Dorsolateral prefrontal cortex (tissue), 120 donors: ENCODE measurements at regions of chr10 and their contacts with region 1.

Region 1: DNA sequence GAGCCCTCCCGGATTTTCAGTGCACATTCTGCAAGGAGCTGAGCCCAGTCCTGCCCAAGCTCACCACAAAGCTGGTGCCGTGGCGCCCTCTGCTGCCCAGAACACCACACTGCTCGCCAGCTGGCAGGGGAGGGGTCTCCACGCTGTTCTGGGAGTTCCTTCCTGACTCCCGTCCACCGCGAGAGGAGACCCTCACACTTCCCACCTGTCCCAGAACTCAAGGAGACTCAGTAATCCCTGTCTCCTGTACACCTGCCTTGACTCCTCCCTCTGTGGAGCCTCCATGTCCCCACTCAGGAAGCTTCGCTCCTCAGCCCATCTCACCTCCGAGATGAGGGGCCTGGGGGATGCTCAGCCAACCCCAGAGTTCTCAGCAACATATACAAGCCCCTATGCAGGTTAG is 11.3 kb downstream of the C10orf105 start:
- DNase-seq: peak; percentile 41 to 79 (median 63)
- H3K4me3 ChIP-seq: no peak overlapping the region
- H3K27ac ChIP-seq: peak overlapping the region in 1 of 59 donors; percentile 31
- H3K27me3 ChIP-seq: no peaks in the 10 kb centered on the region
- CTCF ChIP-seq: peak; percentile 55 to 95 (median 87)

Region 2: GRCh38 chr10:71325267-71325666 is 383.0 kb before region 1 on chr10:
- intact Hi-C with region 1: loop called in 1 of 2 experiments (anchors 2 kb)
- DNase-seq: no peak
- H3K4me3 ChIP-seq: no peak overlapping the region
- H3K27ac ChIP-seq: no peak overlapping the region
- H3K27me3 ChIP-seq: no peaks in the 10 kb centered on the region
- CTCF ChIP-seq: no peak

Region 3: DNA sequence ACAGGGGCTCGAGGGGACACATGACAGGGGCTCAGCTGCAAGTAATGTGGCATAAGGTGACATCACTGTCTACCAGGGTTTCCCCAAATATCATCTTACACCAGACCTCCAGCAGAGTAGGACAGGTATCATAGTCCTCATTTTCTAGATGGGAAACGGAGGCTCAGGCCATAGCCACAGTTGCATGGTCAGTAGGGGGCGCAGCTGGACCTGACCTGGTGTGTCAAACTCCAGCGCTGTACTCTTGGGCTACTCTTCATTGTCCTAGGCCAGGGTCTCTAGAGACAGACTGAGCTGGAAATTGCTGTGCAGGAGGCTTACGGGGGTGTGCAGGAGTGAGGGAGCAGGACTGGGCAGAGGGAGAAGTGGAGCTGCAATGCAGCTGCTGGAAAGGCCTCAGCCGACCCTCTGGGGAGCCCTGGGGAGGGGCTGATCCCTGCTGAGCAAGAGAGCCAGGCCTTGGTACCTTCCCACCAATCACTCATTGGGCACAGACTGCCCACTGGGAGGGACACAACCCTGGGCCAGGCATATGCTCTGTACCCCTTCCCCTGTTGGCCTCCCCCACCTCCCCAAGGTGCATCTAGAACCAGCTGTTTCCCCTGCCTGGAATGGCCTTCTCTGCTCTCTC is 221.7 kb before region 1 on chr10:
- intact Hi-C with region 1: loop called in 1 of 2 experiments (anchors 10 kb)
- DNase-seq: peak in 6 of 10 donors; percentile 31 to 65 (median 52)
- H3K4me3 ChIP-seq: no peak overlapping the region
- H3K27ac ChIP-seq: no peak overlapping the region
- H3K27me3 ChIP-seq: no peaks in the 10 kb centered on the region
- CTCF ChIP-seq: peak in 53 of 56 donors; percentile 14 to 73 (median 56)

Region 4: GRCh38 chr10:71805776-71806703 is 97.7 kb after region 1 on chr10:
- intact Hi-C with region 1: no loop called
- DNase-seq: no peak
- H3K4me3 ChIP-seq: no peak overlapping the region
- H3K27ac ChIP-seq: peak overlapping the region in 13 of 59 donors; percentile 7 to 80 (median 38)
- H3K27me3 ChIP-seq: no peaks in the 10 kb centered on the region
- CTCF ChIP-seq: no peak